Mammary epithelial cell (primary cell): ENCODE measurements at regions of chr7 and their contacts with region 1.

Region 1: GRCh38 chr7:40827217-40828085 is 692.6 kb downstream of the SUGCT start:
- DNase-seq: peak; percentile 76
- H3K4me3 ChIP-seq: peak overlapping the region in 1 of 3 experiments; percentile 0
- H3K27ac ChIP-seq: peak overlapping the region; percentile 94
- H3K4me1 ChIP-seq: peaks cover 59% of the 10 kb centered on the region
- H3K27me3 ChIP-seq: no peaks in the 10 kb centered on the region
- CTCF ChIP-seq: no peak

Region 2: DNA sequence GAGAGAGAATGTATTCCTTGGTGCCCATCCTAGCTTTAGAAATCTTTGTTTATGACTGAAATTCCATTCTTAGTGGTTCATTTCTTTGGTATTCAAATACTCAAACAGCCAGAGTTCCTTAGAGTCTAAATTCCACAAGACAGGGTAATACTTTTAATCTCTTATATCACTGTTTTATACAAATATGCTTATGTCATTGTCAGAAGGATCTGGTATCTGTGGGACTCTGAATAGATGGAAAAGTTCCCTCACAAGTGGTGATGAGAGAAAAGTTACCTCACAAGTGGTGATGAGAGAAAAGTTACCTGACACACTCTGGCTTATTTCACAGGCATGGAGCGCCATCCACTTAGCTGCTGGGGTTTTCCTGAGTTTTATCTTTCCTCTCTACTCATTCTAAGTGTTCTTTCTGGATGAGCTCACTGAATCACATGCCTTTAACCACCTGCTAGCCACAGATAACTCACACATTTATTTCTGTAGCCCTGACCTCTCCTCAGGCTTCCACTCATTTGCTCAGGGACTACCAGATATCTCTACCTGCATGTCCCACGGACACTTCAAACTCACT is 91.3 kb after region 1 on chr7:
- CTCF ChIA-PET with region 1: no interaction called
- dilution Hi-C with region 1: no loop called
- in situ Hi-C with region 1: no loop called
- intact Hi-C with region 1: loop called (anchors 5 kb)
- DNase-seq: peak; percentile 93
- H3K4me3 ChIP-seq: no peak overlapping the region
- H3K27ac ChIP-seq: peak overlapping the region; percentile 65
- H3K4me1 ChIP-seq: peaks cover 34% of the 10 kb centered on the region
- H3K27me3 ChIP-seq: no peaks in the 10 kb centered on the region
- CTCF ChIP-seq: no peak

Region 3: GRCh38 chr7:41067576-41067975 is 240.1 kb after region 1 on chr7:
- CTCF ChIA-PET with region 1: no interaction called
- dilution Hi-C with region 1: no loop called
- in situ Hi-C with region 1: no loop called
- intact Hi-C with region 1: no loop called
- DNase-seq: no peak
- H3K4me3 ChIP-seq: no peak overlapping the region
- H3K27ac ChIP-seq: no peak overlapping the region
- H3K4me1 ChIP-seq: peaks cover 16% of the 10 kb centered on the region
- H3K27me3 ChIP-seq: no peaks in the 10 kb centered on the region
- CTCF ChIP-seq: no peak